BJ (cell line): ENCODE measurements at regions of chr4 and their contacts with region 1.

Region 1: DNA sequence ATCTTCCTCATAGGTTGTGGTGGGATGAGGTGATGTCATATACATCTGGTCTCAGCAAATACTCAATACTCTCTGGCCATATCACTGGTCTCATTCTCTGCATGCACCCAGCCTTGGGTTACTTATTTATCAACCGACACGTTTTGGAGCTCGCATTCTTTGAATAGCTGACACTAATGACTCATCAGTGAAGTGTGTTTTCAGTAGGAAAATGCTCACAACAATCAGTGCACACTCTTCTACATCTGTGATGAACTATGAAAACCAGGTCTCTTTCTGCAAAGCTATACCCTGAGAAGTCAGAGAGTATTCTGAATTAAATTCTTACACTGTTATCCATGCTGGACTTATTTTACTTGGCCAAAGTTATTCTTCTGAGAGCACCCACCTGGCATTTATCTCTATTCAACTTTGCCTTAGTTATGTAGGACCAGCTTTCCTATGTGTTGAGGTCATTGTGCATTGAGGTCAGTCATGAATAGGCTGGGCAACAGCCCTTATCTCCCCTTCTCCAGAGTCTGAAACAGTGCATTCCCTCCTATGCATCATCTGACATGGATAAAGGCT is 58.7 kb upstream of the DHX15 start:
- DNase-seq: peak; percentile 37
- H3K4me3 ChIP-seq: no peak overlapping the region
- H3K27me3 ChIP-seq: no peaks in the 10 kb centered on the region; the same call in none of the 2 replicates
- CTCF ChIP-seq: no peak

Region 2: GRCh38 chr4:23162275-23162674 is 1480.8 kb before region 1 on chr4:
- CTCF ChIA-PET with region 1: no interaction called
- POLR2A ChIA-PET with region 1: interaction called, 11 read pairs
- DNase-seq: no peak
- H3K4me3 ChIP-seq: no peak overlapping the region
- H3K27me3 ChIP-seq: no peaks in the 10 kb centered on the region
- CTCF ChIP-seq: no peak

Region 3: DNA sequence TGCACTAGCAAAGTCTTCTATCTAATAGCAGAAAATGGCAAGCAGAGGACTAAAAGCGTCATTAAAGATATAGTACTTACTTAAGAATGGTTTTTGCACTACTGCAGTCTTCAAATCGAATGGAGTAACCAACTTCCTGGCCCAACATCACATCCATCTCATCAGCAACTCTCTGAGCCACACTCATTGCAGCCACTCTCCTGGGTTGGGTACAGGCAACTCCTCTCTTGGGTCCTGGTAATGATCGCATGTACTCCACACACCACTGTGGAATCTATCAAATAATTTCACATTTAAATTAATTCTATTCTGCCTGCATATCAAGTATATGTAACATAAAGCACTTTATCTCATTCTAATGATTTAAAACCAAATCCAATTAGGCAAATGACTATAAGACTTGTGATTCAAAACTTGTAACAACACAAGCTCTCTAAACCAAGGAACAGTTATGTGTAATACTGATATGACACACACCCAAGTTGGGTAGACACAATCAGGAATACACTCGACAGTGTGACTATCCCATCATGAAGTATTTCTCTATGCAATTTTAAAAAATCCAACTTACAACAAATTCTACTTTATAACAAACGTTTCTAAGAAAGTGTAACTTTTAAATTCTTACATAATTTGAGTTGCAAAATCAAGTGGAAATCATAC is 72.4 kb before region 1 on chr4:
- CTCF ChIA-PET with region 1: no interaction called
- POLR2A ChIA-PET with region 1: no interaction called
- DNase-seq: no peak
- H3K4me3 ChIP-seq: no peak overlapping the region
- H3K27me3 ChIP-seq: no peaks in the 10 kb centered on the region
- CTCF ChIP-seq: no peak

Region 4: DNA sequence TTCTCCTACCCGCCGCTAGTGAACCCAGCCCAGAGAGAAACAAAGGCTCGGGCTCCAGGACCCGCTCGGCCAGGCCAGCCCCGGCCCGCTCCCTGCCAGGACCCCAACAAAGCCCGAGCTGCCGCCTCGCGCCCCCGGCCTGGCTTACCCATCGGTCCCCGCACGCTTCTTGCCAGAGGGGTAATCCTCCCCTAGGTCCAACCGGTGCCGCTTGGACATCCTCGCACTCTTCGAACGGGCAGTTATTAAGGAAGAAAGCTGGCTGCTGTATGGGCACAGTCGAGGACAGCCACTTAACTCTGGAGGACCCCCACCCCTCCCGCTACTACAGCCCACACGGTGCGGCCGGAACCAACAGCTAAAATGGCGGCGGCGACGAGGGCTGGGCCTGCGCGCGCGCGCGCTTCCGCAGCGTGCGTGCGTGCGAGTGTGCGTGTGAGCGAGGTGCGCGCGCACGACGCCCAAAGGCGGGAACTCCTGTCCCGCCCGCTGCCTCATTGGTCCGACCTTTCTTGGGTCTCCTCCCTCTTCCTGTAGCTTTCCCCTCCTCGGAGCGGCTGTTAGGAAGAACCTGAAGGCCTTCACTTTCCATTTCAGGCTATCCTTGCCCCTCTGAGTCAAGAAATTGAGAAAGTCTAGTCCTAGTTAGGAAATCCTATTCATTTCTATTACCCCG is 58.8 kb before region 1 on chr4 and contains the start of gene DHX15:
- CTCF ChIA-PET with region 1: no interaction called
- POLR2A ChIA-PET with region 1: interaction called, 13 read pairs
- DNase-seq: peak; percentile 75
- H3K4me3 ChIP-seq: peak within 1 kb of the TSS; percentile 99
- H3K27me3 ChIP-seq: no peaks in the 10 kb centered on the region
- CTCF ChIP-seq: 0 out of 2 replicates have a peak, but pooled peaks have one; percentile 4
- polyA plus RNA-seq, gene DHX15: 53.2 and 97.9 TPM in 2 replicates